T-cell (primary cell): ENCODE measurements at regions of chr11 and their contacts with region 1.

Region 1: GRCh38 chr11:121591405-121592033 is 138.8 kb upstream of the SORL1-AS1 start:
- DNase-seq: peak; percentile 31 to 88 (median 58)
- ATAC-seq: peak; percentile 75 to 84 (median 80)
- H3K4me3 ChIP-seq: no peak overlapping the region
- H3K4me3 Mint-ChIP-seq: no peak overlapping the region
- H3K27ac ChIP-seq: no peak overlapping the region
- H3K27ac Mint-ChIP-seq: peak overlapping the region; percentile 54 to 66
- H3K4me1 ChIP-seq: peaks cover 0 to 4% of the 10 kb centered on the region in 2 experiments
- H3K4me1 Mint-ChIP-seq: peaks cover 0 to 16% (median 6%) of the 10 kb centered on the region in 3 donors
- H3K27me3 ChIP-seq: no peaks in the 10 kb centered on the region
- H3K27me3 Mint-ChIP-seq: no peaks in the 10 kb centered on the region

Region 2: GRCh38 chr11:121318848-121319834 is 272.4 kb before region 1 on chr11:
- CTCF ChIA-PET with region 1: interaction called, 3 to 15 read pairs
- POLR2A ChIA-PET with region 1: no interaction called
- DNase-seq: peak in 18 of 35 experiments; percentile 2 to 70 (median 16)
- ATAC-seq: peak; percentile 57 to 65 (median 58)
- H3K4me3 ChIP-seq: no peak overlapping the region
- H3K4me3 Mint-ChIP-seq: no peak overlapping the region
- H3K27ac ChIP-seq: no peak overlapping the region
- H3K27ac Mint-ChIP-seq: peak overlapping the region in 1 of 2 donors; percentile 50
- H3K4me1 ChIP-seq: peaks cover 0 to 5% of the 10 kb centered on the region in 2 experiments
- H3K4me1 Mint-ChIP-seq: peaks cover 15 to 30% (median 24%) of the 10 kb centered on the region in 3 donors
- H3K27me3 ChIP-seq: no peaks in the 10 kb centered on the region
- H3K27me3 Mint-ChIP-seq: no peaks in the 10 kb centered on the region

Region 3: DNA sequence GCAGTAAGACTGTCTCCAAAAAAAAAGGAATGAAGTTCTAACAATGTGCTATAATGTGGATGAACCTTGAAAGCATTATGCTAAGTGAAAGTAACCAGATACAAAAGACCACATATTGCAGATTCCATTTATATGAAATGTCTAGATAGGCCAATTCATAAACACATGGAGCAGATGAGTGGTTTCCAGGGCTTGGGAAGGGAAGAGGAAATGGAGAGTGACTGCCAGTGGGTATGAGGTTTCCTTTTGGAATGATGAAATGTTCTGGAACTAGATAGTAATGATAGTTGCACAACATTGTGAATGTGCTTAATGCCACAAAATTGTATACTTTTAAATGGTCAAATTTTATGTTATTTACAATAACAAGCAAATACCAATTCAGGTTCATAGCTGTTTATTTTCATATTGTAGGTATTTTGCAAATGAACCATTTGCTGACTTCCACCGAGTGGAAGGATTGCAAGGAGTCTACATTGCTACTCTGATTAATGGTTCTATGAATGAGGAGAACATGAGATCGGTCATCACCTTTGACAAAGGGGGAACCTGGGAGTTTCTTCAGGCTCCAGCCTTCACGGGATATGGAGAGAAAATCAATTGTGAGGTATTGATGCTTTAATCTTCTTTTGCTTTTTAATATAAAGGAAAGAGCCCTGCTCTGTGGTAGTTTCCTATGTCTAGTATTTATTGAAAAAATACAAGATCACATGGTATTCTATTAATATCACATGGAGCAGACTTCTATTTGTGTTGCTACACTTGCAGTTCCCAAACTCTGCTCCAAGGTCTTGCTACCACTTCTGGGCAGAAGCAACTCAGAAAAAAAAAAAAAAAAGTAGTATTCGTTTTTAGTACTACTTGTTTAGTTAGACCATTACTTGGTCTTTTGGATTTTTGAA is 71.0 kb before region 1 on chr11:
- CTCF ChIA-PET with region 1: no interaction called
- POLR2A ChIA-PET with region 1: no interaction called
- DNase-seq: no peak
- ATAC-seq: no peak
- H3K4me3 ChIP-seq: no peak overlapping the region
- H3K4me3 Mint-ChIP-seq: no peak overlapping the region
- H3K27ac ChIP-seq: no peak overlapping the region
- H3K27ac Mint-ChIP-seq: peak overlapping the region; percentile 58 to 59
- H3K4me1 ChIP-seq: peaks cover 0 to 4% of the 10 kb centered on the region in 2 experiments
- H3K4me1 Mint-ChIP-seq: peaks cover 47 to 58% (median 53%) of the 10 kb centered on the region in 3 donors
- H3K27me3 ChIP-seq: no peaks in the 10 kb centered on the region
- H3K27me3 Mint-ChIP-seq: no peaks in the 10 kb centered on the region

Region 4: DNA sequence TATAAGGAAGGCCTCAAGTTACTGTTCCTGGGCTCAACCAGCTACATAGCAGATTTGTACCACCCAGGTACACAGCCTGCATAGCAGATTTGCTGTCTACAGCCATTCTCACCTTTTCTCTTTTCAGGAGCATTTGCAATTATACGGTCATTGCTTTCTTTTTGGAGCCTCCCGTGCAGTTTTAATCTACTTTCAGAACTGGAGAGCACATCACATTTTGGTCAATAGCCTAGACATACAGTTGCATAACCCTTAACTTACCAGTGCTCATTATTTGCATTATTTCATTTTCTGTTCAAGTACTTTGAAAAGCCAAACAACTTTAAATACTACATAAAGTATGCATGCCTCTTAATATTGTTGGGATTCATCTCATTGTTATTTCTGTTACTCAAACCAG is 11.8 kb after region 1 on chr11:
- CTCF ChIA-PET with region 1: interaction called, 4 to 5 read pairs
- POLR2A ChIA-PET with region 1: interaction called, 6 to 10 read pairs
- DNase-seq: no peak
- ATAC-seq: no peak
- H3K4me3 ChIP-seq: no peak overlapping the region
- H3K4me3 Mint-ChIP-seq: no peak overlapping the region
- H3K27ac ChIP-seq: no peak overlapping the region
- H3K27ac Mint-ChIP-seq: no peak overlapping the region
- H3K4me1 ChIP-seq: no peaks in the 10 kb centered on the region
- H3K4me1 Mint-ChIP-seq: peaks cover under 1 to 7% (median 5%) of the 10 kb centered on the region in 3 donors
- H3K27me3 ChIP-seq: no peaks in the 10 kb centered on the region
- H3K27me3 Mint-ChIP-seq: no peaks in the 10 kb centered on the region

Region 5: DNA sequence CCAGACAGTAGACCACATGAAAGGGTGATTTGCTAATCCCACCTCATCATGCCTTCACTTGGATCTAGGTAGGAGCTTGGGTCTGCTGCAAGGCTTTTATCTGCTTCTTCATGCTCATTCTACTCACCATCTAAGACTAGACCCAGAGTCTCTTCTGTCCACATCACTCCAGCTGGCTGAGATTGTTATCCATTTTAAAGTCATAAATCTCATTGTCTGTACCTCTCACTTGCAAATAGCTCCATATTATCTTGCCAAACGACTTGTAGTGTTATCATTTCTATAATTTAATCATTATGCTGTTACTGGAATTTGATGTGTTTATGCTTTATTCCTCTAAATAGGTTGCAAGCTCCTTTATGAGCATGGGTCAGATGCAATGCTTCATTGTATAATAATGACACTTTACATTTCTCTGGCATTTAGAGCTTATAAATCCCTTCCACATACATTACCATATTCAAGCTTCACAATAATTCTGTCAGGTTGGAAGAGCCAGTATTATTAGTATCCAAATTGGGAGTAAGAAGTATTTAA is 115.4 kb after region 1 on chr11:
- CTCF ChIA-PET with region 1: no interaction called
- POLR2A ChIA-PET with region 1: interaction called in 1 of 2 experiments, 10 read pairs
- DNase-seq: no peak
- ATAC-seq: no peak
- H3K4me3 ChIP-seq: no peak overlapping the region
- H3K4me3 Mint-ChIP-seq: no peak overlapping the region
- H3K27ac ChIP-seq: no peak overlapping the region
- H3K27ac Mint-ChIP-seq: no peak overlapping the region
- H3K4me1 ChIP-seq: no peaks in the 10 kb centered on the region
- H3K4me1 Mint-ChIP-seq: no peaks in the 10 kb centered on the region
- H3K27me3 ChIP-seq: no peaks in the 10 kb centered on the region
- H3K27me3 Mint-ChIP-seq: peaks cover 6 to 22% of the 10 kb centered on the region in 2 donors